Left ventricle myocardium superior (tissue), 1 donor: ENCODE measurements at regions of chr1 and their contacts with region 1.

Region 1: DNA sequence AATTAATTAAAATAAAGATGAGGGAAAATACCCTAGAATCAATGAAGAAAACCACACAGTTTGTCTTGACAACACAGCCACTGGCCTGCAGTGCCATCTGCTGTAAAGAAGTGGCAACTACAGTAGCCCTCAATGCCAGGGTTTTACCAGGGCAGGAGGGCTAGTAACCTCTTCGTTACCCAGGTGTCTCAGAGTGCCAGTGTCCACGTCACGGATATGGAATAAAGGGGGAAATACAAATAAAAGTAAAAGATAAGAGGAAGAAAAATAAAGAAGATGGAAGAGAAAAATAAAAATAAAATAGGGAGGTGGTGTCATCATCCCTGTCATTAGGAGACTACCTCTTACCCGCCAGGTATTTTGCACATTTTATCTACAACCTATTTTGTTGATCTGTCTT is 14.2 kb upstream of the SLC44A3 start:
- DNase-seq: peak; percentile 44
- ATAC-seq: peak; percentile 33

Region 2: GRCh38 chr1:94481473-94481933 is 324.4 kb before region 1 on chr1:
- intact Hi-C with region 1: loop called (anchors 5 kb)
- DNase-seq: no peak
- ATAC-seq: peak; percentile 94